ENCODE measurements at regions of chr2 and their contacts with region 1.

Region 1: DNA sequence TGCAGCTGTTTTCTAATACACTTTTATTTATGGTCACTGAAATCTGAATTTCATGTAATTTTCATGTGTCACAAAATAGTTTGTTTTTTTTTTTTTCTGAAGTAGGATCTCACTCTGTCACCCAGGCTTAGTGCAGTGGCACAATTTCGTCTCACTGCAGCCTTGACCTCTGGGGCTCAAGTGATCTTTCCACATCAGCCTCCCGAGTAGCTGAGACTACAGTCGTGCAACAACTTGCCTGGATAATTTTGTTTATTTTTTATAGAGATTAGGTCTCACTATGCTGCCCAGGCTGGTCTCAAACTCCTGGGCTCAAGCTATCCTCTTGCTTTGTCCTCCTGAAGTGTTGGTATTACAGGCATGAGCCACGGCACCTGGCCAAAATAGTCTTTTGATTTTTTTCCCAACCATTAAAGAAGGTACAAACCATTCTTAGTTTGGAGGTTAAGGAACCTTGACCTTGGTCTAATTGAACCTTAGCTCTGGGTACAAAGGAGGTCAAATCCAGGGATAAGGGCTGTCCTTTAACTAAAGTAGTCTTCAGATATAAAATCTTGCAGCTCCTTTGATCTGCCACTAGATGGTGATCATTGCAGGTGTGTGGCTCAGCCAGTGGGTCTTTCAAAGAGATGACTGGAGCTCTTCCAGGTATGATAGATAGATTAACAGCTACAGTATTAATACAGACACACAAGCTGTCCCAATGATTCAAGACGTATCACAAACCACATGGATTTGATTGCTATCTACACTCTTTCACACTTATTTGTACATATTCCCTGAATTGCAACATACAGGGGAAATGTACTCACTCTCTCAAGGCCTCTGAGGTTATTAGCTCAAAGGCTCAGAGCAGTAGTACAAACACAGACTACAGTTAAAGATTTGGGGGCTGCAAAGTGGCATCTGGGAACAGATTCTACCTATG is 4.7 kb upstream of the KRCC1 start:
- DNase-seq: no peak
- ATAC-seq: no peak
- H3K4me3 Mint-ChIP-seq: no peak overlapping the region
- H3K27ac Mint-ChIP-seq: no peak overlapping the region
- H3K4me1 Mint-ChIP-seq: peaks cover 20% of the 10 kb centered on the region
- H3K27me3 Mint-ChIP-seq: no peaks in the 10 kb centered on the region

Region 2: DNA sequence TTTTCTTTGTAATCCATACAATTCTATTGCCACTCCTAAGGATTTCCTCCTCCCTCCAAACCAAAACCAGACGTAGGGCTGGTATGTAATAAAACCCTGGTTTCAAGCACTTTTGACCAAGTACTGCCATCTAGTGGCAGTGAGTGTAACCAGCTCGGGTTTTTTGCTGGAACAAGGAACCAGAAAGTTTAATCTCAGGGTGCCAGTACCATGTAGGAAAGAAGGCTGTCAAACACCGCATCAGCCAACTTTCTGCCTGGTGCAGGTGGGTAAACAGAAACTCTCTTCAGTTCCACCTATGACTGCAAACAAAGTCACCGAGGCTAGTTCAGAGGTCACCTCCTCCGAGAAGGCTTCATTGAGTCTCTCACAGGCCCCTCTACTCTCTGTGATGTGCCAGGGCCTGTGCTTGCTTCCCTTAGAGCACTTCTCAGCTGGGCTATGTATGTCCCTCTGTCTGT is 99.7 kb after region 1 on chr2:
- CTCF ChIA-PET with region 1: interaction called, 108 read pairs
- DNase-seq: peak; percentile 69
- ATAC-seq: peak; percentile 47
- H3K4me3 Mint-ChIP-seq: no peak overlapping the region
- H3K27ac Mint-ChIP-seq: no peak overlapping the region
- H3K4me1 Mint-ChIP-seq: no peaks in the 10 kb centered on the region
- H3K27me3 Mint-ChIP-seq: no peaks in the 10 kb centered on the region

Region 3: GRCh38 chr2:88190808-88191721 is 130.8 kb after region 1 on chr2:
- CTCF ChIA-PET with region 1: interaction called, 16 read pairs
- DNase-seq: no peak
- ATAC-seq: no peak
- H3K4me3 Mint-ChIP-seq: no peak overlapping the region
- H3K27ac Mint-ChIP-seq: no peak overlapping the region
- H3K4me1 Mint-ChIP-seq: no peaks in the 10 kb centered on the region
- H3K27me3 Mint-ChIP-seq: peaks cover 2% of the 10 kb centered on the region

Region 4: GRCh38 chr2:88345842-88346241 is 285.6 kb after region 1 on chr2:
- CTCF ChIA-PET with region 1: no interaction called
- DNase-seq: no peak
- ATAC-seq: no peak
- H3K4me3 Mint-ChIP-seq: no peak overlapping the region
- H3K27ac Mint-ChIP-seq: no peak overlapping the region
- H3K4me1 Mint-ChIP-seq: peaks cover 15% of the 10 kb centered on the region
- H3K27me3 Mint-ChIP-seq: peaks cover 15% of the 10 kb centered on the region